Ascending aorta (tissue), 2 donors: ENCODE measurements at regions of chr11 and their contacts with region 1.

Region 1: DNA sequence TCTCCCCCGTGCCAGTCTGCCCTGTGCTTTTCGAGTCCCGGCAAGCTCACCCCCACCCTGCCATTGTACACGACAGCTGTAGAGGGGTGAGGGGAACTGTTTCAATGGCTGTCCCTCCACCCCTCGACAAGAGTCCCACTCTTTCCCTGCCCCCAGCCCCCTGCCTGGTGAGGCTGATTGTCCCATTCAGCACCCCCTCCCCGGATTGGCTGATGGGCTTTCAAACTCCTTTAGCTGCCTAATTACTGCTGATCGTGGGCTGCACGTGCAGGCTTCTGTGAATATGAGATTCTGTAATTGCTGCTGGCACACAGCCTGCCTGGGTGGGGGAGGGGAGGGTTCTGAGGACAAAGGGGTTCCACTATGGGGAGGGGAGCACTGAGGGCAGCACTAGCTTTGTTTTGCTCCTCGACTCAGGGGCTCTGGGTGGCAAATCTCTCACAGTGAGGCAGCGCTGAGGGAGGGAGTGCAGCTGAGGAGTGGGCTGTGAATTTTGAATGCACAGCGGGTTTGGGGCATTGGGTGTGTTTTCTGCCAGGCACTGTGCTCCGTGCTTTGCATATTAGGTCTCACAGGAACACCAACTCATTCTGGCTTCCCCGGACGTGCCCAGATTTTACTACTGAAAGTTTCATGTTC is 42.6 kb upstream of the ACCSL start:
- DNase-seq: peak in 1 of 2 donors; percentile 63
- H3K4me3 ChIP-seq: no peak overlapping the region
- H3K27ac ChIP-seq: no peak overlapping the region
- H3K4me1 ChIP-seq: peaks cover 9 to 43% of the 10 kb centered on the region in 2 donors
- H3K27me3 ChIP-seq: no peaks in the 10 kb centered on the region
- CTCF ChIP-seq: no peak

Region 2: DNA sequence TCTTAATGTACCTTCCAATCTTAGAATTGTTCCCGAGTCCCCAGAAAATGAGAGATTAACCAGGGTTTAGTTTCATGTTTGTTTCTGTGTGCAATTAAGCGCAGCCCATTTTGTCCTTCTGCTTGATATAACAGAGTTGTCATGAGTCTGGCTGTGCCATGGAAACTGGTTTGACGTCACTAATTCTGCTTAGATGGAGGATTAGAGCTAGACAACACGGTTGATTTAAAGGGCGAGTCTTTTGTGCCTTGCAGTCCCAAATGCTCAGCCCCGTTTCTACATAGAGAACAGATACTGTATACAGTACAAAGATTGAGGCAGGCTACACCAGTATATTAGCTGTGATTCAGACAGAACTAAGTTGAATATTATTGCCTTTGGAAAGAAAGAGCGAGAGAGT is 170.1 kb before region 1 on chr11:
- intact Hi-C with region 1: no loop called
- DNase-seq: no peak
- H3K4me3 ChIP-seq: no peak overlapping the region
- H3K27ac ChIP-seq: no peak overlapping the region
- H3K4me1 ChIP-seq: peaks cover 3 to 30% of the 10 kb centered on the region in 2 donors
- H3K27me3 ChIP-seq: no peaks in the 10 kb centered on the region
- CTCF ChIP-seq: no peak

Region 3: GRCh38 chr11:43969543-43969942 is 35.6 kb before region 1 on chr11:
- intact Hi-C with region 1: loop called (anchors 5 kb)
- DNase-seq: peak in 1 of 2 donors; percentile 56
- H3K4me3 ChIP-seq: no peak overlapping the region
- H3K27ac ChIP-seq: peak overlapping the region in 1 of 2 donors; percentile 60
- H3K4me1 ChIP-seq: peaks cover 3 to 13% of the 10 kb centered on the region in 2 donors
- H3K27me3 ChIP-seq: no peaks in the 10 kb centered on the region
- CTCF ChIP-seq: no peak

Region 4: GRCh38 chr11:43987384-43988039 is 17.7 kb before region 1 on chr11:
- intact Hi-C with region 1: loop called (anchors 2 kb)
- DNase-seq: peak; percentile 54 to 94
- H3K4me3 ChIP-seq: peak overlapping the region in 1 of 2 donors; percentile 12
- H3K27ac ChIP-seq: peak overlapping the region; percentile 77 to 83
- H3K4me1 ChIP-seq: peaks cover 9 to 32% of the 10 kb centered on the region in 2 donors
- H3K27me3 ChIP-seq: no peaks in the 10 kb centered on the region
- CTCF ChIP-seq: no peak